HCT116 (cell line): ENCODE measurements at regions of chr10 and their contacts with region 1.

Region 1: GRCh38 chr10:22427890-22428571 is 82.7 kb downstream of the SPAG6 start:
- DNase-seq: peak; percentile 92
- ATAC-seq: peak; percentile 80
- H3K4me3 ChIP-seq: peak overlapping the region; percentile 4 to 46; a peak in 3 of 4 replicates
- H3K27ac ChIP-seq: peak overlapping the region; percentile 92
- H3K4me1 ChIP-seq: peaks cover 44 to 63% of the 10 kb centered on the region in 2 experiments
- H3K27me3 ChIP-seq: no peaks in the 10 kb centered on the region
- CTCF ChIP-seq: no peak
- POLR2A ChIP-seq: no peak
- RAD21 ChIP-seq: no peak

Region 2: DNA sequence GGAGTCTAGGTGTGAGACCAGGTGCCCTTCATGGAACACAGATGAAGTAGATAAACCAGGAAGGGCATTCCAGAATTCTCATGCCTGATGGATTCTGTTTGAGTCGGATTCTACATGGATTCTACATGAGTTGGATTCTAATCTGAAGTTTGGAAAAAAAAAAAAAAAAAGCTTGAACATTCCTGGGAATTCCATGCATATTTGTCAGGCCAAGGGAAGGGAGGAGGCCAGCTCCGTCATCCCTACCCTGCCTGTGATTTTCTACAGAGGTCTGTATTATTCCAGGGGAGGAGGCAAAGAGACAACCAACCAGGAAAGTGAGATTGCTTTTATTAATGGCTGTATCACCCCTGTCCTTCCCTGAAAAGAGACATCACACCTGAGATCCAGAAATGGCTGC is 182.5 kb before region 1 on chr10:
- CTCF ChIA-PET with region 1: no interaction called
- POLR2A ChIA-PET with region 1: no interaction called
- RAD21 ChIA-PET with region 1: no interaction called
- intact Hi-C with region 1: loop called (anchors 5 kb)
- DNase-seq: no peak
- ATAC-seq: no peak
- H3K4me3 ChIP-seq: no peak overlapping the region
- H3K27ac ChIP-seq: peak overlapping the region; percentile 74; the same call in 1 of the 2 replicates
- H3K4me1 ChIP-seq: peaks cover 28 to 50% of the 10 kb centered on the region in 2 experiments
- H3K27me3 ChIP-seq: no peaks in the 10 kb centered on the region
- CTCF ChIP-seq: no peak
- POLR2A ChIP-seq: no peak
- RAD21 ChIP-seq: no peak